PC-3 (cell line): ENCODE measurements at regions of chr7 and their contacts with region 1.

Region 1: GRCh38 chr7:4159761-4160554 is 522.1 kb upstream of the FOXK1 start:
- DNase-seq: peak; percentile 80
- ATAC-seq: peak; percentile 89
- H3K4me3 ChIP-seq: no peak overlapping the region
- H3K27ac ChIP-seq: peak overlapping the region; percentile 64
- H3K4me1 ChIP-seq: peaks cover 20% of the 10 kb centered on the region
- H3K27me3 ChIP-seq: no peaks in the 10 kb centered on the region
- CTCF ChIP-seq: no peak

Region 2: GRCh38 chr7:3916146-3916545 is 243.8 kb before region 1 on chr7:
- CTCF ChIA-PET with region 1: no interaction called
- POLR2A ChIA-PET with region 1: no interaction called
- intact Hi-C with region 1: loop called (anchors 5 kb)
- DNase-seq: peak; percentile 64
- ATAC-seq: peak; percentile 73
- H3K4me3 ChIP-seq: 0 out of 2 replicates have a peak overlapping the region, but pooled peaks have one; percentile 18
- H3K27ac ChIP-seq: peak overlapping the region; percentile 65
- H3K4me1 ChIP-seq: peaks cover 35% of the 10 kb centered on the region
- H3K27me3 ChIP-seq: no peaks in the 10 kb centered on the region
- CTCF ChIP-seq: no peak

Region 3: GRCh38 chr7:4103352-4104091 is 56.4 kb before region 1 on chr7:
- CTCF ChIA-PET with region 1: interaction called, 3 read pairs
- POLR2A ChIA-PET with region 1: no interaction called
- intact Hi-C with region 1: loop called (anchors 1 kb)
- DNase-seq: peak; percentile 67
- ATAC-seq: peak; percentile 93
- H3K4me3 ChIP-seq: peak overlapping the region; percentile 33; the same call in 1 of the 2 replicates
- H3K27ac ChIP-seq: peak overlapping the region; percentile 36; the same call in 1 of the 2 replicates
- H3K4me1 ChIP-seq: peaks cover 5% of the 10 kb centered on the region
- H3K27me3 ChIP-seq: no peaks in the 10 kb centered on the region
- CTCF ChIP-seq: peak; percentile 69